ENCODE measurements at regions of chr5 and their contacts with region 1.

Region 1: GRCh38 chr5:67453111-67453905 is 256.7 kb upstream of the CD180 start:
- DNase-seq: no peak
- ATAC-seq: no peak
- H3K4me3 ChIP-seq: no peak overlapping the region
- H3K27ac ChIP-seq: no peak overlapping the region
- H3K4me1 ChIP-seq: peaks cover 0 to 4% (median 0%) of the 10 kb centered on the region in 12 donors
- H3K27me3 ChIP-seq: no peaks in the 10 kb centered on the region
- CTCF ChIP-seq: no peak
- POLR2A ChIP-seq: no peak

Region 2: DNA sequence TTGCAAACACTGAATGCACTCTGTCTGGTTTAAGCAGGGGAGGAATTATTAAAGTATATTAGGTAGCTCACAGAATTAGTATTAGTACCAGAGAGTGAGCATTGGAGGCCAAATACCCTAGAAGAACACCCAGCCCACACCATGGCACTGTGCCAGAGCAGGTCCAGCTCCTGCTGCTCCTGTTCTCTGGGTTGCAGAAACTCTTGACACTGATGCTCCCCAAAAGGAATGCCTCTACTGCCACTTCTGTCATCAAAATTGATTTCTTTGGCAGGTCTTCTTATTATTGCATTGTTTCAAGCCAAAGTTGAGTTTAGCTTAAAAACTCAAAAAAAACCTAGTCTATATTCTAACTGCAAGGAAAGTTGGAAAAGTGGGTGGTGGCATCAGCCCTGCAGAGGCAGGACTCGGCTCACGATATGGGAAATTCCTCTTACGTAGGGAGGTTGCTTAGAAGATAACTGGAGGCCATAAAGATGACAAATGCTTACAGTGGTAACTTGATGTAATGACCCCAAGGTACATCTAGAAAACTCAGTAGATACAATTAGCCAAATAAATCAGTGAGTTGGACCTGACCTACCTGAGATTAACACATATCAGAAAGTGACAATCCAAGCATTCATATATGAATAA is 380.1 kb before region 1 on chr5:
- intact Hi-C with region 1: no loop called
- DNase-seq: peak in 1 of 5 donors; percentile 27
- ATAC-seq: no peak
- H3K4me3 ChIP-seq: no peak overlapping the region
- H3K27ac ChIP-seq: no peak overlapping the region
- H3K4me1 ChIP-seq: peaks cover 0 to 20% (median 9%) of the 10 kb centered on the region in 12 donors
- H3K27me3 ChIP-seq: no peaks in the 10 kb centered on the region
- CTCF ChIP-seq: no peak
- POLR2A ChIP-seq: no peak

Region 3: GRCh38 chr5:67257500-67257899 is 195.8 kb before region 1 on chr5:
- intact Hi-C with region 1: no loop called
- DNase-seq: no peak
- ATAC-seq: no peak
- H3K4me3 ChIP-seq: no peak overlapping the region
- H3K27ac ChIP-seq: peak overlapping the region in 1 of 12 donors; percentile 44
- H3K4me1 ChIP-seq: no peaks in the 10 kb centered on the region
- H3K27me3 ChIP-seq: no peaks in the 10 kb centered on the region
- CTCF ChIP-seq: no peak
- POLR2A ChIP-seq: no peak

Region 4: DNA sequence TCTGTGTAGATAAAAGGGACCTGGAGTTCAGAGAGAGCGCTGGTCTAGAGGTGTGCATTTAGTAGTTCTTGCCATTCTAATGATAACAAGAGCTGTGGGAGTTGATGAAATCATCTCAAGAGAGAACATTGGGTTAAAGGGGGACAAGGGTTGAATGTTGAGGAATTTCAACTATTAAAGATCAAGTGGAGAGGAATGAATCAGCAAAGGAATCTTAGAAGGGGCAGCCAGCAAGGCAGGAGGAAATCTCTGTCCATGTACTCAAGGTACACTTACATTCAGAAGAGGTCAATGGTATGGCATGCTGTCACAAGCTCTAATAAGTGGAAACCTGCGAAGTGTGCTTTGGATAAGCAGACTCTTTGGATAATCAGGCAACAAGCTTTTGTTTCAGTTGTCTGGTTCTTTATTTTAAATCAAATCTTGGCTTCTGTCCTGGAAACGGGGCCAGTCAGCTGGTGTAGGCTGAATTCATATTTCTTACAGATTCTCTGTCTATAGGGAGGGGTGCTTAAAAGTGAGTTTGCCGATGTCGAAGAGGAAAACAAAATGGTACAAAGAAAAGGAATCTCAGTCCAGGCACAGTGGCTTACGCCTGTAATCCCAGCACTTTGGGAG is 63.7 kb after region 1 on chr5:
- intact Hi-C with region 1: loop called in 1 of 10 experiments (anchors 10 kb)
- DNase-seq: no peak
- ATAC-seq: no peak
- H3K4me3 ChIP-seq: no peak overlapping the region
- H3K27ac ChIP-seq: no peak overlapping the region
- H3K4me1 ChIP-seq: no peaks in the 10 kb centered on the region
- H3K27me3 ChIP-seq: no peaks in the 10 kb centered on the region
- CTCF ChIP-seq: no peak
- POLR2A ChIP-seq: no peak

Region 5: DNA sequence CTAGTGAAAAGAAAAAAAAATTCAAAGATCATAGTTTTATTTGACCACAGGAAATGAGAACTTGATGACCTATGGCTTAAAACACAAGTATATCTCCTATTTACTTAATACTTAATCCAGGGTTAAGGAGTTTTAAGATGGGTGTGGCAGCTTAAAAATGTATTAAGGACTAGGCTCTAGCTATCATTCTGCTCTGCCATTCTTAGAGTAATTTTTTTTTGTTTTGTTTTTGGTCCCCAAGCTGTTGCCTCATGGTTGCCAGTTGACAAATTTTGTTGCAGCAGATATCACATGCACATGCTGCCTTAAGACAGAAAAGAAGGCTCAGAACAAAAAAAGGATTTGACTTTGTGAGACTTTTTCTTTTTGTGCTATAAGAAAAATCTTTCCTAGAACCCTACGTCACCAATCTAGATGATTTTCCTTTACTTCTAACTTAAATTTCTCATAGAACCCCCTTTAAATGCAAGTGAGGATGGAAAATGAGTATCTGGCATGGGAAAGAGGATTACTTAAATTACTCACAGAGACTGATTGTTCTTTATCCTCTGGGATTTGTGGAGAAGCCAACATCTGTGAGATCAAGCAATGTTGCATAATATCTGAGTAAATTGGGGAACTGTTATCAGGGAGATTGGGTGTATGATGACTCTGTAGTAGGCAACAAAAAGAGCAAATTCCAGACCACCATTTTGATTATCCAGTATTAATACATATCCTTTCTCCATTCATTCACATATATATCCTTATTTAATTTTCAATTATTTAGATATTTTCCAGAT is 108.0 kb after region 1 on chr5:
- intact Hi-C with region 1: no loop called
- DNase-seq: no peak
- ATAC-seq: peak in 2 of 4 donors; percentile 59 to 65
- H3K4me3 ChIP-seq: no peak overlapping the region
- H3K27ac ChIP-seq: no peak overlapping the region
- H3K4me1 ChIP-seq: peaks cover 0 to 6% (median 0%) of the 10 kb centered on the region in 12 donors
- H3K27me3 ChIP-seq: no peaks in the 10 kb centered on the region
- CTCF ChIP-seq: no peak
- POLR2A ChIP-seq: no peak